Activated naive CD4-positive, alpha-beta T cell treated with anti-CD3 and anti-CD28 coated beads for 36 hours (primary cell): ENCODE measurements at regions of chr6 and their contacts with region 1.

Region 1: GRCh38 chr6:44338228-44339122 is 4.0 kb upstream of the SPATS1 start:
- DNase-seq: peak; percentile 81
- H3K4me3 Mint-ChIP-seq: no peak overlapping the region
- H3K27ac Mint-ChIP-seq: no peak overlapping the region
- H3K4me1 Mint-ChIP-seq: no peaks in the 10 kb centered on the region
- H3K27me3 Mint-ChIP-seq: peaks cover 24% of the 10 kb centered on the region

Region 2: GRCh38 chr6:44096612-44097011 is 241.9 kb before region 1 on chr6:
- CTCF ChIA-PET with region 1: interaction called, 3 read pairs
- intact Hi-C with region 1: loop called (anchors 2 kb)
- DNase-seq: peak; percentile 89
- H3K4me3 Mint-ChIP-seq: no peak overlapping the region
- H3K27ac Mint-ChIP-seq: no peak overlapping the region
- H3K4me1 Mint-ChIP-seq: no peaks in the 10 kb centered on the region
- H3K27me3 Mint-ChIP-seq: no peaks in the 10 kb centered on the region

Region 3: GRCh38 chr6:44151348-44152108 is 186.9 kb before region 1 on chr6:
- CTCF ChIA-PET with region 1: interaction called, 4 read pairs
- intact Hi-C with region 1: loop called (anchors 1 kb)
- DNase-seq: peak; percentile 81
- H3K4me3 Mint-ChIP-seq: no peak overlapping the region
- H3K27ac Mint-ChIP-seq: no peak overlapping the region
- H3K4me1 Mint-ChIP-seq: no peaks in the 10 kb centered on the region
- H3K27me3 Mint-ChIP-seq: no peaks in the 10 kb centered on the region

Region 4: DNA sequence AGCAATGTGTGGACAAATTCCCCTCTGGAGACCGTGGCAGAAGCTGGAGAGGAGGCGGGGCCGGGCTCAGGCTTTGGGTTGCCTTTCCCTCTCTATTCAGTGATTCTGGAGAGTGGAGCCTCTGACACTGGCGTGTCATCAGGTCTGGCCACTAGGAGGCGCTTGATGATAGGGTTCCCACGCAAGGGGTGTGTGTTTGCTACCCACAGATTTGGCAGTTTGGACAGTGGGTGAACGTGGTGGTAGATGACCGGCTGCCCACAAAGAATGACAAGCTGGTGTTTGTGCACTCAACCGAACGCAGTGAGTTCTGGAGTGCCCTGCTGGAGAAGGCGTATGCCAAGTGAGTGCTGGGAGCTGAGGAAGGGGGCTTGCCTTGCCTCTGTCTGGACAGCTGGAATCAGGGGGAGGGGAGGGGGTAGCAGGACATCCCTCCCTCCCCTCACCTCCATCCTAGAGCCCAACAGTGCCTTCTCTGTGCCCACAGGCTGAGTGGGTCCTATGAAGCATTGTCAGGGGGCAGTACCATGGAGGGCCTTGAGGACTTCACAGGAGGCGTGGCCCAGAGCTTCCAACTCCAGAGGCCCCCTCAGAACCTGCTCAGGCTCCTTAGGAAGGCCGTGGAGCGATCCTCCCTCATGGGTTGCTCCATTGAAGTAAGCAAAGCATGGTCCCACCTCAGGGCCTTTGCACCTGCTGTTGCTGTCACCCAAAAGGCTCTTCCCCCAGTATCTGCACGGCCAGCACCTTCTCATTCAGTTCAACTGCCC is 165.6 kb before region 1 on chr6:
- CTCF ChIA-PET with region 1: interaction called, 4 read pairs
- intact Hi-C with region 1: loop called (anchors 1 kb)
- DNase-seq: peak; percentile 89
- H3K4me3 Mint-ChIP-seq: no peak overlapping the region
- H3K27ac Mint-ChIP-seq: no peak overlapping the region
- H3K4me1 Mint-ChIP-seq: peaks cover 4% of the 10 kb centered on the region
- H3K27me3 Mint-ChIP-seq: peaks cover 6% of the 10 kb centered on the region

Region 5: DNA sequence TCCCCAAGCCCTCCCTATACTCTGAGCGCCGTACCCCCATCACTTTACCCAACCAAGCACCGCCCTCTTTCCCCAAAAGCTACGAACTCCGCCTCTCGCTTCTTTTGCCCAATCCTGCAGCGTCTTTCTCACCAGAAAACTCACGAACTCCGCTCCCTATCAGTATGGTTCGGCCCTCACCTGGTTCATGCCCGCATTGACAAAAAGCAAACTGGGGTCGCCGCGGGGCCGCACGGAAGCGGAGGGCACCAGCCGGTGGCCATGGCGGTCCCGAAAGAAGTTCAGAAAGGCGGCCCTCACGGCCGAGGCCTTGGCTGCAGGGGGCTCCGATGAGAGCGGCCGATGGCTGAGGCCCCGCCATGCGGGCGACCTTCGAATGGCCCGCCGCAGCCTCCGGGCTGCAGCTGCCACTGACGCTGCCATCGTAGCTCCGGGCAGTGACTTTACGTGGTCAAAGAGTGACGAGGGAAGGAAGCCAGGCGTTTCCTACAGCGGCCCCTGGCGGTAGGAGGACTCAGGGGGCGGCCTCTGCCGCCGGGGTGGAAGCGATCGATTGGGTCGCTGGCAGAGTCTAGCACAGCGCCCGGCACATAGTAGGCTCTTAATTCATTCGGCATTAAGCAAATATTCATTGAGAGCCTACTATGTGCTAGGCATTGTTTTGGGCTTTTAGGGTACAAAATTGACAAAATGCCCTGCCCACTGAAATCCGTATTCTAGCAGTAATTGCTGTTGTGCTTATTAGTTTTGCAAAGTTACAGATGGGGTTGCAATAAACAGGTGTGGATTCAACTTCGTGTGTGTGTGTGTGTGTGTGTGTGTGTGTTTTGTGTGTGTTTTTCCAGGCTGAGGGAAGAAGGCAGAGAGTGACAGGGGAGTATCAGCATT is 25.3 kb before region 1 on chr6 and contains the start of gene AARS2:
- CTCF ChIA-PET with region 1: interaction called, 7 read pairs
- intact Hi-C with region 1: loop called (anchors 1 kb)
- DNase-seq: peak; percentile 95
- H3K4me3 Mint-ChIP-seq: peak within 1 kb of the TSS; percentile 96
- H3K27ac Mint-ChIP-seq: peak within 1 kb of the TSS; percentile 79
- H3K4me1 Mint-ChIP-seq: peaks cover 17% of the 10 kb centered on the region
- H3K27me3 Mint-ChIP-seq: no peaks in the 10 kb centered on the region
- total RNA-seq, gene AARS2: 11.6 to 12.9 TPM

Region 6: DNA sequence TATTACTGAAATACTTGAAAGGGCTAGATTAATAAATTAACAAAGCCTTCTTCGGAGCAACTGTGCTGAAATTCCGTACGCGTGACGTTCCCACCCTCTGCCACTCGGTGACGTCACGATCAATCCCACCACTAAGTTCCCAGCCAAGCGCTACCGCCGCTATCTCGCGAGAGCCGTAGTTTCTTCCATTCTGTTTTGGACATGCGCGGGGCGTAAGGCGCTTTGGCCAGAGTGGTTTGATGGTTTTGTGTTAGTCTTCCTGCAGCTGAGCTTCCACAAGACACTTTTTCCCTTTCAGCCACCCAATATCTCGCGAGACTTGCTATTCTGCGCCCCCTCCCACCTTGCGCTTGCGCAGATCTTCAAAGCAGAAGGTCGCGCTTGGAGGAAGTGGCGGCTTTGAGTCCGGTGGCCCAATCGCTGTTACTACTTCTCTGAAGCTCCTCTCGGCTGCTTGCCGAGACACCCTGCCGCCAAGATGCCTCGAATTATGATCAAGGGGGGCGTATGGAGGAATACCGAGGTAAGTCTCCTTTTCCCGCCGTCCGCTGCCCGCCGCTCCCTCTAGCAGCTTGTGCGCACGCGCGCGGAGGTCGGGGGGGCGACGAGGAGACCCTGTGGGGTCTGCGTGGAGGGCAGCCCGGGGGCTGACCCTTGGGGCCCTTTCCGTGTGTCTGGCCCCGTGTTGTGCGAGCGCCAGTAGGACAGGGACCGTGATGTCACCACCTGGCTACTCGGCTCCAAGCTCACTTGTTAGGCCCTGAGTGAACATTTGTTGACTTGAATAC is 49.1 kb after region 1 on chr6 and contains the start of gene CDC5L:
- CTCF ChIA-PET with region 1: no interaction called
- intact Hi-C with region 1: loop called (anchors 2 kb)
- DNase-seq: peak; percentile 96
- H3K4me3 Mint-ChIP-seq: peak within 1 kb of the TSS; percentile 93
- H3K27ac Mint-ChIP-seq: peak within 1 kb of the TSS; percentile 96
- H3K4me1 Mint-ChIP-seq: peaks cover 34% of the 10 kb centered on the region
- H3K27me3 Mint-ChIP-seq: no peaks in the 10 kb centered on the region
- total RNA-seq, gene CDC5L: 17.9 to 18.8 TPM

Region 7: DNA sequence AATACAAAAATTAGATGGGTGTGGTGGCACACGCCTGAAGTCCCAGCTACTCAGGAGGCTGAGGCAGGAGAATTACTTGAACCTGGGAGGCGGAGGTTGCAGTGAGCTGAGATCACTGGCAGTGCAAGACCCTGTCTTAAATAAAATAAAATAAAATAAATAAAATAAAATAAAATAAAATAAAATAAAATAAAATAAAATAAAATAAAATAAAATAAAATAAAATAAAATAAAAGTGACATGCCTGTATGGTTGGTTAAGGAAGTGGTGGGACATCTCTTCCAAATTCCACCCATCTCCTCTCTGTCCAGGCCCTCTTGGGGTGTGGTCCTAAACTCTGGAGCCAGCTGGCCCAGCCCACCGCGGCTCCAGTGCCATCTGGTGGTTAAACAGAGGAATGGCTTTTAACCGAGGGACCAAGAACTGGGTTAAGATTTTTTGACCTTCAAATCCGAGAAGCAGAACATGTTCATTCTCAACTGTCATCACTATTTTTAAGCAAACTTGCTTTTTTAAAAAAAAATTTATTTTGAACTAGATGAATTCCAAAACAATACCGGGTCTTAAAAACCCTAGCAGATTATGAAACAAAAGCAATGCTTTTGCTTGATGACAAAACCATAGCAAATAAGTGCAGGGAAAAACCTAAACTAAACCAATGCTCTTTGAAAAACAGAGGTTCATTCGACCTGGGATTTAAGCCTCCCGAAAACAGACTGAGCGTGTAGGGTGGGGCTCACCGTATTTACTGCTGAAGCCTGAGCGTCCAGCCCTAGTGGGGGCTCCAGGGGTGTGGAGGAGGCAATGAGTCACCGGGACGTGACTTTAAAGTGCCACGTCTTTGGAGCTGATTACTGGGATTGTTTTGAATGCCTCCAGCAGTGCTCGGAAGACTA is 117.8 kb after region 1 on chr6:
- CTCF ChIA-PET with region 1: interaction called, 3 read pairs
- intact Hi-C with region 1: loop called (anchors 1 kb)
- DNase-seq: peak; percentile 56
- H3K4me3 Mint-ChIP-seq: no peak overlapping the region
- H3K27ac Mint-ChIP-seq: no peak overlapping the region
- H3K4me1 Mint-ChIP-seq: no peaks in the 10 kb centered on the region
- H3K27me3 Mint-ChIP-seq: peaks cover 3% of the 10 kb centered on the region